ENCODE measurements at regions of chr1 and their contacts with region 1.

Region 1: DNA sequence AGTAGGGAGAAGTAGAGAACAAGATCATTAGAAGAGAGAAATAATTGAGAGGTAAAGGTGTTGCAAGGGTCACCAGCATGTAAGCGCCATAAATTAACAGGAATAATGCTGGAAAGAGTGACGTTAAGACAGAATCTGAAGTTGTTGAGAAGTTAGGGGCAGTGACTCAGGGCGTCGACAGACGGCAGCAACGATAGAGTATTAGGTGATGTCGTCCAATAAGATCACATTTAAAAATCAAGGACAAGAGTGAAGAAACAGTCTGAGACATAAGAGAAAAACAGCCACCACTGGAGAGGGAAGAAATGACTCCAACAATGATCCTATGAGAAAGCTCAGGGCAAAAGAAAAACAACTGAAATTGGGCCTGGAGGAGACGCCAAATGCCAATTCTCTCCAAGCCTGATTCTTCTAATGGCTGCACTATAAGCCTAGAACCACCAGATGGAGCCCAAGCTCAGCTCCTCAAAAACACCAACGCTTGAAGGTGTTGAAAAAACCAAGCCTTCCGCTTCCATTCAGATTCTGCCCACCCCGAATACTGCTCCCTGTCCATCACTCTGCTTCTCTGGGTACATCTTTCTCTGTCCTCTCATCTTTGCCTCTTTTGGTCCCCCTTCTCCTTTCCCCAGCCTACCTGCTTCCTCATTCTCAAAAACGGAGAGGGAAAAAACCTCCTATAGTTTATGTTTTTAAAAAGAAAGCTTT is 70.0 kb downstream of the LUZP1 start:
- DNase-seq: peak in 1 of 3 donors; percentile 76
- ATAC-seq: peak; percentile 75
- H3K4me3 ChIP-seq: no peak overlapping the region
- H3K4me1 ChIP-seq: peaks cover 25% of the 10 kb centered on the region
- CTCF ChIP-seq: peak; percentile 81

Region 2: GRCh38 chr1:23013657-23014056 is 85.0 kb before region 1 on chr1:
- intact Hi-C with region 1: no loop called
- DNase-seq: no peak
- ATAC-seq: no peak
- H3K4me3 ChIP-seq: no peak overlapping the region
- H3K4me1 ChIP-seq: no peaks in the 10 kb centered on the region
- CTCF ChIP-seq: no peak

Region 3: DNA sequence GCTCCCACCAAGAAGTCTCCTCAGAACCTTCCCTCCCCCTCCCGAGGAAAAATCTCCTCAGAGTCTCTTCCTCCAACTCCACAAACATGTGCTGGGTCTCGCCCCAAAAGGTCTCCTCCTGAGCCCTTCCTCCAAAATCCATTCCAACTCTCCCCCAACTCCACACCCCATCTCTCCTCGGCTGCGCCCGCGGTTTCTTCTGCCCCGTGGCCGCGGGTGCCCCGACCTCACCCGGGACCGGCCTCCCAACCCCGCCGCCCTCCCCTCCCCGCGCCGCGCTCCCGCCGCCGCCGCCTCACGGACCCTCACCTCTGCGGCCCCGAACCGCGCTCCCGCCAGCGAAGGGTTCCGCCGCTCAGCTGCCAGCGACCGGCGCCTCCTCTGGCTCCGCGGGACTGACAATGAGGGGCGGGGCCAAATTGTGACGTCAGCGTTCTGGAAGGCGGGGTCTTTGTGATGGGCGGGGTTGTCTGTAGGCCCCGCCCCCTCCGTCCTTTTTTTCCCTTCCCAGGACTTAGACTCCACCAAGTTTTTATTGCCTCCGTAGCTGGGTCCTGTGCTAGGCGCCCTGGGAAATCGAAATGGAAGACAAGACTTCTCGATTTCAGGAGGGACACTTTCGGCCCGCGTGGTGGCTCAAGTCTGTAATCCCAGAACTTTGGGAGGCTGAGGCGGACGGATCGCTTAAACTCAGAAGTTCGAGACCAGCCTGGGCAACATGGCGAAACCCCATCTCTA is 70.0 kb after region 1 on chr1 and contains the start of gene LUZP1:
- intact Hi-C with region 1: loop called in 1 of 2 experiments (anchors 5 kb)
- DNase-seq: peak; percentile 91 to 93 (median 91)
- ATAC-seq: peak; percentile 93
- H3K4me3 ChIP-seq: peak within 1 kb of the TSS; percentile 65
- H3K4me1 ChIP-seq: peaks cover 31% of the 10 kb centered on the region
- CTCF ChIP-seq: no peak
- total RNA-seq, gene LUZP1: 48.4 to 57.7 (median 52.0) TPM

Region 4: GRCh38 chr1:23184212-23184934 is 85.8 kb after region 1 on chr1:
- intact Hi-C with region 1: loop called (anchors 2 kb)
- DNase-seq: peak in 2 of 3 donors; percentile 40 to 54
- ATAC-seq: no peak
- H3K4me3 ChIP-seq: no peak overlapping the region
- H3K4me1 ChIP-seq: peaks cover 6% of the 10 kb centered on the region
- CTCF ChIP-seq: peak; percentile 31

Region 5: GRCh38 chr1:23210351-23210785 is 111.8 kb after region 1 on chr1:
- intact Hi-C with region 1: no loop called
- DNase-seq: no peak
- ATAC-seq: no peak
- H3K4me3 ChIP-seq: no peak overlapping the region
- H3K4me1 ChIP-seq: no peaks in the 10 kb centered on the region
- CTCF ChIP-seq: no peak